Activated B cell treated with CpG ODN at 0.5 μM for 24 hours (primary cell): ENCODE measurements at regions of chr9 and their contacts with region 1.

Region 1: DNA sequence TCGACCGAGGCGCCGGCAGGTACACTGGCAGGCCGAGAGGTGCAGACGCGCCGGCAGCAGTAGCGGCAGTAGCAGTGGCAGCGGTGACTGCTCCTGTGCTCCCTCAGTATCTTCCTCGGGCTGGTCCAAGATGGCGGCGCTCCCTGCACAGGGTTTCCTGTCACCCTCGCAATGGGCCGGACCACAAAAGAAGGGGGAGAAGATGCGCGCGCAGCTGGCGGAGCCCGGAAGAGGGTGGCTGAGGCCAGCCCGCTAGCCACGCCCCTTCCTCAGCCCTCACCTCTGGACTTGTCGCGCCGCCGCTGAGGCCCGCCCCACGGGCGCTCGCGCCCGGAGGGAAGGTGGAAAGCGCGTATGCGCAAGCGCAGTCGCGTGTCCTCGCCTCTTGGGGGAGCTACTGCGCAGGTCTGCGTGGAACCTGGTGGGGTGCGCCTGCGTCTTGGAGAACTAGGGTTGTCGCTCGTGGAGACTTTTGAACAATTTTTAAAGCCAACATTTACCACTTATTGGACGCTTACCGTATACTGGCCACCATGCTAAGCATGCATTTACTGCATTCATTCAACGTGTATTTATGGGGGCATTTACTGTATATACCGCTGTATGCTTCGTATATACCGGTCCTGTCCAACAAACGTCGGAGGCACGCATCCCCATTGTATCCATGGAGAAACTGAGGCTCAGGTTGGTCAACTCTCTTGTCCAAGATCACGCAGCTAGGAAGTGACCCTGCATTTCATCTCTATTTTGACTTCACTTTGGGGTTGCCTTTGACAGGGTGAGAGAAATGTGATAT is at the start of gene RAB14:
- DNase-seq: peak; percentile 100
- ATAC-seq: peak; percentile 88
- H3K4me3 Mint-ChIP-seq: peak within 1 kb of the TSS; percentile 94
- H3K27ac Mint-ChIP-seq: peak within 1 kb of the TSS; percentile 91
- H3K4me1 Mint-ChIP-seq: peaks cover 63% of the 10 kb centered on the region
- H3K27me3 Mint-ChIP-seq: no peaks in the 10 kb centered on the region
- CTCF ChIP-seq: no peak
- total RNA-seq, gene RAB14: 55.9 and 63.8 TPM in 2 replicates

Region 2: DNA sequence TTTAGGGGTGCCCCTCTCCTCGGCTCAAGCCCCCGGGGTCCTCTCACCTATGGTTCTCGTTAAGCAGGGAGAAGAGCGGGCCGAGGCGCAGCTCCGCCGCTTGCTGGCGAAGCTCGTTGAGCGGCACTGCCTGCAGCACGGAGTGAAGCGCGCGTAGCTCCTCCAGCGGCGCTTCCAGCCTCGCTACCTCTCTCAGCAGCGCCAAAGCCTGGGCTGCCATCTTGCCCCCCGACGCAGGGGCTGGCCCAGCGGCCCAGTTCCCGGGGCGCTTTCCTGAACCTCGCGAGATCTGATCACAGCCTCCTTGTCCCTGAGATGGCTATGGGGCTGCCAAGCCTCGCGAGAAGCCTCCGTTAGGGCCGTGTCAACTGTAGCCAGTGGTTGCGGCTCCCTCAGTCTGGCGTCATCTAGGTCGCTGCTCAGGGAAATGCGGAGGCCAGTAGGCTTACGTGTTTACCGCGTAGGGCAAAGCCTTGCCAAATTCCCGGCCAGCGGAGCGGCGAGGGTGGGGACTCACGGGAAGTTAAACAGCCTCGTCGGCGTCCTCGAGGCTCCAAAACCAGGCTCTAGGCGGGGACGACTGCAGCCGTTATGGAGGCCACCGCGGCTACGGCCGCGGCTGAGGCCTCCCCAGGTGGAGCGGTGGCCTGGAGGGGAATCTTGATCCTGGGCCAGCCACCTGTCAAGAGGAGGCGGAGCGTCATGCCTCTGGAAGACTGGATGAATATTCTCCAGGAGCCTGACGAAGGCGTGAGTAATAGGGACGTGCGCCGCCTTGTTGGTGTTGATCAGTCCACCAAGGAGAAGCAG is 359.0 kb before region 1 on chr9 and contains the start of gene PSMD5:
- CTCF ChIA-PET with region 1: no interaction called
- POLR2A ChIA-PET with region 1: no interaction called
- intact Hi-C with region 1: loop called (anchors 1 kb)
- DNase-seq: peak; percentile 75
- ATAC-seq: peak; percentile 99
- H3K4me3 Mint-ChIP-seq: peak within 1 kb of the TSS; percentile 90
- H3K27ac Mint-ChIP-seq: peak within 1 kb of the TSS; percentile 91
- H3K4me1 Mint-ChIP-seq: peaks cover 42% of the 10 kb centered on the region
- H3K27me3 Mint-ChIP-seq: no peaks in the 10 kb centered on the region
- CTCF ChIP-seq: no peak
- total RNA-seq, gene PSMD5: 34.8 and 38.9 TPM in 2 replicates

Region 3: DNA sequence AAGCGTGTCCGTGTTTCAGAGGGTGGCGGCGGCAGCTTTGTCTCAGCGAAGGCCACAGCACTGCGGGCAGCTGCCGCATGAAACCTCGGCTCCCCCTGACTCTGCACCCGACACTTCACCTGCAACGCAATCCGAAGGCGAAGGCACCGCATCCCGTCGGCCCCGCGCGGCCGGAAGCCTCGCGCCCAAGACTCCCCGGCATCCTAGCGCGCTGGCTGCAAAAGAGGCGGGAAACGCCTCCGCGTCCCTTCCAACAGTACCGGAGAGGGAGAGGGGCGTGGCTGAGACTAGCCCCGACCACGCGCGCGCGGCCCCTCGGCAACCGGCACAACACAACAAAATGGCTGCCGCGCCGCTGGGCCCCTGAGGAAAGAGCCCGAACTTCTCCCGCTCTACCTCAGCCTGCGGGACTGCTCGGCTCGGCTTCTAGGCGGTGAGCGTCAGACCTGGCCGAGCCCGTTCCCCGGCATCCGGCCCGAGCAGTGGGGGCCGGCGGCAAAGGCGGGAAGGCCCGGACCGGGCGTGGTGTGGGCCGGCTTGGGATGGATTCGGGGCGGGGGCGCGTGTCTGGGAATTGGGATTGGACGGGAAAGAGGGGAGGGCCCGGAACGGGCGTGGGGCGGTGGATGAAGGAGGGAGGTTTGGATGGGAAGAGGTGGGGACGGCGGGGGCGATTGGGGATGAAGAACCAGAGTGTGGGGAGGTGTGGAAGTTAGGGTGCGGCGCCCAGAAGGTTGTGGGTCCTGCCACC is 127.1 kb before region 1 on chr9 and contains the start of gene CNTRL:
- CTCF ChIA-PET with region 1: no interaction called
- POLR2A ChIA-PET with region 1: interaction called, 5 read pairs
- intact Hi-C with region 1: loop called (anchors 2 kb)
- DNase-seq: peak; percentile 77
- ATAC-seq: peak; percentile 68
- H3K4me3 Mint-ChIP-seq: peak within 1 kb of the TSS; percentile 96
- H3K27ac Mint-ChIP-seq: peak within 1 kb of the TSS; percentile 98
- H3K4me1 Mint-ChIP-seq: peaks cover 75% of the 10 kb centered on the region
- H3K27me3 Mint-ChIP-seq: no peaks in the 10 kb centered on the region
- CTCF ChIP-seq: no peak
- total RNA-seq, gene CNTRL: 98.4 and 110 TPM in 2 replicates

Region 4: DNA sequence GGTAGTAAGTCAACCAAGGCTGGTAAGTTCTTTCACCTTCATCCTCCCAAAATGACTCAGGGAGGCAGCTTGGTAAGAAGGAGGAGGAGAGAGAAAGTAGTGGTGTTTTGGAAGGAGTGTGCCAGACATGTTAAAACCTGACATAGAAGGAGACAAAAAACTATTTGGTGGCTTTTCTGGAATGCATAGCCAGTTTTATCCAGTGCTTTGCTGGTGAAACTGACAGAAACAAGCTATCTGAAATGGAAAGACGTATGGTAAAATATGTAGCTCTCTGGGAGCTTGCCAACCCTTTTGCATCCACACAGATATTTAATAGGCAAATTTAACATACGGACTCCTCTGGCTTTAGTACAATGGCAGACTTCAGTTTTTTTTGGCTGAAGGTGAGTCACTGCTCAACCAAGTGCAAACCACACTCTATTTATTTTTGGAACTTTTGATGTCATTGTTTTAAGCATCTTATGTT is 45.6 kb before region 1 on chr9:
- CTCF ChIA-PET with region 1: no interaction called
- POLR2A ChIA-PET with region 1: interaction called, 7 read pairs
- intact Hi-C with region 1: loop called (anchors 2 kb)
- DNase-seq: no peak
- ATAC-seq: peak; percentile 87
- H3K4me3 Mint-ChIP-seq: peak overlapping the region; percentile 67
- H3K27ac Mint-ChIP-seq: peak overlapping the region; percentile 92
- H3K4me1 Mint-ChIP-seq: peaks cover 67% of the 10 kb centered on the region
- H3K27me3 Mint-ChIP-seq: no peaks in the 10 kb centered on the region
- CTCF ChIP-seq: no peak

Region 5: DNA sequence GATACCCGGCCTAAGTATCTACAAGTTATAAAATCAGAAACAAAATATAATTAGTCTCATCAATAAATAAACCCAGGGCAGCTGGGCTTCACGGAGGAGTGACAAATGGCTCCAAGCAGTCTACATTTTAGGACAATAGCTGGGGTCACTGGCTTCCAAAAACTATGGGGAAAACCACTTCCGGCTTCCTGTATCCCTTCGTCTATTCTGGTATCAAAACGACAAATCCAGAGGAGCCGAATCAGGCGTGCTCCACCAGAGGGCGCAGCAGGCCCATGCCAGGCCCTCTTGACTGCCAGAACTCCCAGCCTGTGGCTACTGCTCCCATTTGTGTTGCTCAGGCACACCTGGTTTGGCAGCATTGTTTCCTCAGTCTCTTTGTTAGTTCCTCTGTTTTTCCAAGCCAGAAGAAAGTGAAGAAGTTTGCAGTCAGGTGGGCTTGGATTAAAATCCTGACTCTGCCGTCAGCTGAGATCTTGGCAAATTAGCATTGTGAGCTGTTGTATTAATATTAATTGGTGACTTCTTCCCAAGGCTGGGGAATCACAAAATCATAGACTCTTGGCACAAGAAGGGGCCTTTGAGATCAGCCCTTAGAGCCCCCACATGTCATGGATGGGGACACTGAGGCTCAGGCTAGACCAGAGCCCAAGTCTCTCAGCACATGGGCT is 11.3 kb after region 1 on chr9:
- CTCF ChIA-PET with region 1: interaction called, 23 read pairs
- POLR2A ChIA-PET with region 1: interaction called, 17 read pairs
- intact Hi-C with region 1: no loop called
- DNase-seq: peak; percentile 57
- ATAC-seq: peak; percentile 76
- H3K4me3 Mint-ChIP-seq: no peak overlapping the region
- H3K27ac Mint-ChIP-seq: peak overlapping the region; percentile 59
- H3K4me1 Mint-ChIP-seq: peaks cover 24% of the 10 kb centered on the region
- H3K27me3 Mint-ChIP-seq: no peaks in the 10 kb centered on the region
- CTCF ChIP-seq: peak; percentile 53

Region 6: DNA sequence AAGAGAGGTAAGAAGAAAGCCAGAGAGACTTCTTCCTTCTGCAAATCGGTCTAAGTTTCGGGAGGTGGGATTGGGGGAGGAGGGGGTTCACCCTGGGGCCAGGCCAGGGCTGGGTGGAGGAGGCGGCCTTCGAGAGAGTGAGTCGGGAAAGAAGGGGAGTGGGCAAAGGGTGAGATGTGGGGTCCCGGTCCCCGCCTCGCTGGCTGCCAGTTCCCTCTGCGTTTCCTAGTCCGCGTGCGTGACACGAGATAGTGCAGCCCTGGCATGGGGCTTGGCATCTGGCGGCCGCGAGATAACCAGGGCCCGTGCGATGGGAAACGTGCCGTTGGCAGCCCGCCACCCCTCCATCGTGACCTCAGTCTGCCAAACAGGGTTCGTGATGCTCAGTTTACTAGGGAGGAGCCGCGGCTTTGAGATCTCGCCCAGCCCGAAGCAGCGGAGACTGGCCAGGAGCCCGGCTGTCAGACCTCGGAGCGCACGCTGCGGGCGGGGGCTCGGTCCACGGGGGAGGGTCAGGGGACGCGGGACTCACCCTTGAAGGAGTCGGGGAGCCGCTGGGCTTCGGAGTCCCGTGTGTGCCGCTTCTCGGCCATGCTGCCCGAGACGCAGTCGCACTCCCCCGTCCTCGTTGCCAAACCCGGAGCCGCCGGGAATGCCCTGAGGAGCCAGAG is 167.8 kb after region 1 on chr9 and contains the start of gene STOM:
- CTCF ChIA-PET with region 1: no interaction called
- POLR2A ChIA-PET with region 1: interaction called, 3 read pairs
- intact Hi-C with region 1: loop called (anchors 5 kb)
- DNase-seq: no peak
- ATAC-seq: peak; percentile 56
- H3K4me3 Mint-ChIP-seq: peak within 1 kb of the TSS; percentile 93
- H3K27ac Mint-ChIP-seq: peak within 1 kb of the TSS; percentile 96
- H3K4me1 Mint-ChIP-seq: peaks cover 28% of the 10 kb centered on the region
- H3K27me3 Mint-ChIP-seq: no peaks in the 10 kb centered on the region
- CTCF ChIP-seq: no peak
- total RNA-seq, gene STOM: 9.8 and 11.3 TPM in 2 replicates